ENCODE measurements at regions of chr1 and their contacts with region 1.

Region 1: GRCh38 chr1:32786856-32787255 is 30.3 kb downstream of the YARS1 start:
- DNase-seq: no peak
- ATAC-seq: peak; percentile 62
- H3K4me3 ChIP-seq: no peak overlapping the region
- H3K27ac ChIP-seq: no peak overlapping the region
- H3K4me1 ChIP-seq: no peaks in the 10 kb centered on the region
- H3K27me3 ChIP-seq: no peaks in the 10 kb centered on the region
- CTCF ChIP-seq: peak in 2 of 3 experiments; percentile 26 to 43; a peak in 3 of 6 replicates
- EP300 ChIP-seq: no peak
- POLR2A ChIP-seq: no peak
- RAD21 ChIP-seq: 0 out of 4 replicates have a peak, but pooled peaks of 1 of the 2 experiments have one; percentile 11

Region 2: GRCh38 chr1:32509939-32510338 is 276.9 kb before region 1 on chr1:
- CTCF ChIA-PET with region 1: no interaction called
- POLR2A ChIA-PET with region 1: no interaction called
- in situ Hi-C with region 1: no loop called
- intact Hi-C with region 1: loop called (anchors 5 kb)
- DNase-seq: no peak
- ATAC-seq: no peak
- H3K4me3 ChIP-seq: no peak overlapping the region
- H3K27ac ChIP-seq: no peak overlapping the region
- H3K4me1 ChIP-seq: no peaks in the 10 kb centered on the region; a peak in 1 of 5 replicates
- H3K27me3 ChIP-seq: peaks cover 6 to 26% of the 10 kb centered on the region in 2 experiments; a peak in 4 of 5 replicates
- CTCF ChIP-seq: no peak
- EP300 ChIP-seq: no peak
- POLR2A ChIP-seq: no peak
- RAD21 ChIP-seq: no peak